CD4-positive, alpha-beta T cell (primary cell): ENCODE measurements at regions of chr1 and their contacts with region 1.

Region 1: DNA sequence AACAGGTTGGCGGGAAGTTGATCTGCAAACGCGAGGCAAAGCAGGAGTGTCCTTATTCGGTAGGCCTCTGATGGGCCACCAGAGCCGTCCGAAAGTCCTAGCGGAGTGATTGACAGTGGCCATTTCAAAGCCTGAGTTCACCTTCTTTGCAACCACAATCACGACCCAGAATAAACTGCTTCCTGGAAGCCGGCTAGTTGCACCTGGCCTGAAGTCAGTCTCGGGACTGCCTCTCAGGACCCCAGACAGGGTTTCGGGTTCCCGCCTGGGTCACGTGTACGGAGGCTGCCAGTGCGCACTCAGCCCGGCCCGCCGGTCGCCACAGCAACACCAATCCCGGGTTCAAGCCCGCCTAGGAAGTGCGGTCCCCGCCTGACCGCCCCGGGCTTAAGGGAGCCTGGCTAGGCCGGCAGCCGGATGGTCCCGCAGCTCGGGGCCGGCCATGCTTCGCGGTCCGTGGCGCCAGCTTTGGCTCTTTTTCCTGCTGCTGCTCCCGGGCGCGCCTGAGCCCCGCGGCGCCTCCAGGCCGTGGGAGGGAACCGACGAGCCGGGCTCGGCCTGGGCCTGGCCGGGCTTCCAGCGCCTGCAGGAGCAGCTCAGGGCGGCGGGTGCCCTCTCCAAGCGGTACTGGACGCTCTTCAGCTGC is at the start of gene TOR3A:
- DNase-seq: peak; percentile 54 to 86 (median 74)
- ATAC-seq: peak; percentile 32
- H3K4me3 ChIP-seq: peak within 1 kb of the TSS; percentile 82
- H3K4me3 Mint-ChIP-seq: peak within 1 kb of the TSS; percentile 99
- H3K27ac ChIP-seq: peak within 1 kb of the TSS; percentile 68 to 81
- H3K27ac Mint-ChIP-seq: peak within 1 kb of the TSS; percentile 92
- H3K4me1 ChIP-seq: peaks cover 32% of the 10 kb centered on the region
- H3K4me1 Mint-ChIP-seq: peaks cover 32% of the 10 kb centered on the region
- H3K27me3 ChIP-seq: no peaks in the 10 kb centered on the region
- H3K27me3 Mint-ChIP-seq: no peaks in the 10 kb centered on the region
- CTCF ChIP-seq: no peak
- total RNA-seq, gene TOR3A: 17.2 TPM

Region 2: DNA sequence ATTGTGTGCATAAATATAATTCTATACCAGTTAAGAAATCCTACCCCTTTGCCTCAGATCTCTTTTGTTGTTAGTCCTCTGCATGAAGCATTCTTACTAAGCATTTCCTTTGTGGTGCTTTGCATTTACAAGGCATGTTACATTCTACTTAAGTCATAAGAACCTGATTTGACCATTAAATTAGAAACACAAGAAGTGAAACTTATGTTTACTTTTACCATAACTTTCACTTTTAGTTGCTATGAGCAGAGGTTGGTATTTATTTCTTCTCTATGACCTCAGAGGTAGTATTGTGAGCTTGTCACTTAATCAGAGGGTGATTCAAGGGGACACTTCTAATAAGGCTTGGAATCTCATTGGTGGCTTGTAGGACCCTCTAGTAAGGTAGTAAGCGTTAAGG is 47.1 kb before region 1 on chr1:
- CTCF ChIA-PET with region 1: no interaction called
- POLR2A ChIA-PET with region 1: interaction called, 4 read pairs
- intact Hi-C with region 1: loop called (anchors 2 to 5 kb)
- DNase-seq: peak in 1 of 14 experiments; percentile 43
- ATAC-seq: peak; percentile 36
- H3K4me3 ChIP-seq: no peak overlapping the region
- H3K4me3 Mint-ChIP-seq: peak overlapping the region; percentile 0
- H3K27ac ChIP-seq: no peak overlapping the region
- H3K27ac Mint-ChIP-seq: peak overlapping the region; percentile 67
- H3K4me1 ChIP-seq: peaks cover 22% of the 10 kb centered on the region
- H3K4me1 Mint-ChIP-seq: peaks cover 87% of the 10 kb centered on the region
- H3K27me3 ChIP-seq: no peaks in the 10 kb centered on the region
- H3K27me3 Mint-ChIP-seq: no peaks in the 10 kb centered on the region
- CTCF ChIP-seq: no peak

Region 3: DNA sequence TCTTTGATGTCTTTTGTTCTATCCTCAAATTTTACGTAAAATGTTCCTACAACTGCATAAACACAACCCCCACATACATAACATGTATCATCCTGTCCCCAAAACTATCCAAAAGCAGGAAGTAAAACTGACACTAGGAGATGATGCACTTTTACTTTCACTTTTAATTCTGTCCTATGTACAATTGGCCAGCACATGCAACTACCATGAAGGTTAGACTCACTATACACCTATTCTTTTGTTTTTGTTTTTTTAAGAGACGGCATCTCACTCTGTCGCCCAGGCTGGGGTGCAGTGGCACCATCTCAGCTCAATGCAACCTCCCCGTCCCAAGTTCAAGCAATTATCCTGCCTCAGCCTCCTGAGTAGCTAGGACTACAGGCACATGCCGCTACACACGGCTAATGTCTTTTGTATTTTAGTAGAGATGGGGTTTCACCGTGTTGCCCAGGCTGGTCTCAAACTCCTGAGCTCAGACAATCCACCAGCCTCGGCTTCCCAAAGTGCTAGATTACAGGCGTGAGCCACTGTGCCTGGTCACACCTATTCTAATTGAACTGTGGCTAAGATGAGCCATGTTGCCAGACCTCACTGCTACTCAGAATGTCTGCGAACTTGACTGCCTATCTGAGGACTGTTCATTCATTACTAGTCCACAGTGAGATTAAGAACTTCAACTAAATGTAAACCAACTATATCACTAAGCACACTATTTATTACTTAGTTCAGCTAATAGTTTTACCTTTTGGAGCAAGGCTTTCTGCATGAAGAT is 48.1 kb after region 1 on chr1:
- CTCF ChIA-PET with region 1: no interaction called
- POLR2A ChIA-PET with region 1: interaction called, 6 read pairs
- intact Hi-C with region 1: loop called in 1 of 2 experiments (anchors 2 kb)
- DNase-seq: peak in 8 of 14 experiments; percentile 12 to 89 (median 28)
- ATAC-seq: peak; percentile 95
- H3K4me3 ChIP-seq: peak overlapping the region; percentile 45
- H3K4me3 Mint-ChIP-seq: peak overlapping the region; percentile 76
- H3K27ac ChIP-seq: peak overlapping the region; percentile 60 to 78
- H3K27ac Mint-ChIP-seq: peak overlapping the region; percentile 86
- H3K4me1 ChIP-seq: peaks cover 14% of the 10 kb centered on the region
- H3K4me1 Mint-ChIP-seq: peaks cover 13% of the 10 kb centered on the region
- H3K27me3 ChIP-seq: no peaks in the 10 kb centered on the region
- H3K27me3 Mint-ChIP-seq: no peaks in the 10 kb centered on the region
- CTCF ChIP-seq: no peak

Region 4: GRCh38 chr1:179229214-179230140 is 147.7 kb after region 1 on chr1 and contains the start of gene ABL2:
- CTCF ChIA-PET with region 1: no interaction called
- POLR2A ChIA-PET with region 1: no interaction called
- intact Hi-C with region 1: loop called in 1 of 2 experiments (anchors 1 kb)
- DNase-seq: peak; percentile 11 to 74 (median 45)
- ATAC-seq: peak; percentile 63
- H3K4me3 ChIP-seq: peak within 1 kb of the TSS; percentile 57
- H3K4me3 Mint-ChIP-seq: peak within 1 kb of the TSS; percentile 98
- H3K27ac ChIP-seq: peak within 1 kb of the TSS in 1 of 2 donors; percentile 57
- H3K27ac Mint-ChIP-seq: peak within 1 kb of the TSS; percentile 82
- H3K4me1 ChIP-seq: peaks cover 11% of the 10 kb centered on the region
- H3K4me1 Mint-ChIP-seq: peaks cover 35% of the 10 kb centered on the region
- H3K27me3 ChIP-seq: no peaks in the 10 kb centered on the region
- H3K27me3 Mint-ChIP-seq: no peaks in the 10 kb centered on the region
- CTCF ChIP-seq: no peak
- total RNA-seq, gene ABL2: 15.8 to 16.4 TPM

Region 5: DNA sequence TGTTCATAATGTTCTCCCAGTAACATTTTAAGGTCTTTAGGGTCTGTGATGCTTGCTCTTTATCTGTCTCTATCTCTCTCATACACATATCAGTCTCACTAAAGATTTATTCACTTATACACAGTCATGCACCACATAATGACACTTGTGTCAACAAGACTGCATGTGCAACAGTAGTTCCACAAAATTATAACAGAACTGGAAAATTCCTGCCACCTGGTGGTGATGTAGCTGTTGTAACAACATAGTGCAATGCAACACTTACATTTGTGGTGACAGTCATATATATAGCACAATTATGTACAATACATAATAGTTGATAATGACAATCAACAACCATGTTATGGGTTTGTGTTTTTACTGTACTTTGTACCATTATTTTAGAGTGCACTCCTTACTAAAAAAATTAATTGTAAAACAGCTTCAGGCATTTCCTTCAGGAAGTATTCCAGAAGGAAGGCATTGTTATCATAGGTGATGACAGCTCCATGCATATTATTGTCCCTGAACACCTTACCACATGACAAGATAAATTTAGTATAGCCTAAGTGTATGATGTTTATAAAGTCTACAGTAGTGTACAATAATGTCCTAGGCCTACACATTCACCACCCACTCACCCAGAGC is 517.9 kb after region 1 on chr1:
- CTCF ChIA-PET with region 1: no interaction called
- POLR2A ChIA-PET with region 1: no interaction called
- intact Hi-C with region 1: loop called in 1 of 2 experiments (anchors 5 kb)
- DNase-seq: peak in 1 of 14 experiments; percentile 14
- ATAC-seq: no peak
- H3K4me3 ChIP-seq: no peak overlapping the region
- H3K4me3 Mint-ChIP-seq: no peak overlapping the region
- H3K27ac ChIP-seq: no peak overlapping the region
- H3K27ac Mint-ChIP-seq: no peak overlapping the region
- H3K4me1 ChIP-seq: no peaks in the 10 kb centered on the region
- H3K4me1 Mint-ChIP-seq: no peaks in the 10 kb centered on the region
- H3K27me3 ChIP-seq: peaks cover 2 to 8% of the 10 kb centered on the region in 2 experiments
- H3K27me3 Mint-ChIP-seq: peaks cover 44% of the 10 kb centered on the region
- CTCF ChIP-seq: no peak